ENCODE measurements at regions of chr13 and their contacts with region 1.

Region 1: GRCh38 chr13:45807520-45808099 is 43.9 kb downstream of the SIAH3 start:
- DNase-seq: no peak
- ATAC-seq: peak; percentile 52 to 70

Region 2: GRCh38 chr13:45879670-45880069 is 72.1 kb after region 1 on chr13:
- intact Hi-C with region 1: loop called in 1 of 2 experiments (anchors 5 kb)
- DNase-seq: peak; percentile 47
- ATAC-seq: peak; percentile 79 to 89

Region 3: GRCh38 chr13:46126552-46127357 is 319.1 kb after region 1 on chr13:
- intact Hi-C with region 1: loop called in 1 of 2 experiments (anchors 10 kb)
- DNase-seq: peak; percentile 48
- ATAC-seq: peak; percentile 88 to 89

Measured in left cardiac atrium (tissue), 4 donors.